Heart right ventricle (tissue), 16 donors: ENCODE measurements at regions of chr10 and their contacts with region 1.

Region 1: GRCh38 chr10:88232029-88232895 is 350.9 kb downstream of the RNLS start:
- DNase-seq: peak; percentile 84
- ATAC-seq: peak; percentile 58 to 72 (median 65)
- H3K4me3 ChIP-seq: no peak overlapping the region
- H3K27ac ChIP-seq: peak overlapping the region; percentile 7 to 77 (median 68)
- H3K4me1 ChIP-seq: peaks cover 6 to 78% (median 42%) of the 10 kb centered on the region in 9 donors
- H3K27me3 ChIP-seq: no peaks in the 10 kb centered on the region
- CTCF ChIP-seq: no peak

Region 2: DNA sequence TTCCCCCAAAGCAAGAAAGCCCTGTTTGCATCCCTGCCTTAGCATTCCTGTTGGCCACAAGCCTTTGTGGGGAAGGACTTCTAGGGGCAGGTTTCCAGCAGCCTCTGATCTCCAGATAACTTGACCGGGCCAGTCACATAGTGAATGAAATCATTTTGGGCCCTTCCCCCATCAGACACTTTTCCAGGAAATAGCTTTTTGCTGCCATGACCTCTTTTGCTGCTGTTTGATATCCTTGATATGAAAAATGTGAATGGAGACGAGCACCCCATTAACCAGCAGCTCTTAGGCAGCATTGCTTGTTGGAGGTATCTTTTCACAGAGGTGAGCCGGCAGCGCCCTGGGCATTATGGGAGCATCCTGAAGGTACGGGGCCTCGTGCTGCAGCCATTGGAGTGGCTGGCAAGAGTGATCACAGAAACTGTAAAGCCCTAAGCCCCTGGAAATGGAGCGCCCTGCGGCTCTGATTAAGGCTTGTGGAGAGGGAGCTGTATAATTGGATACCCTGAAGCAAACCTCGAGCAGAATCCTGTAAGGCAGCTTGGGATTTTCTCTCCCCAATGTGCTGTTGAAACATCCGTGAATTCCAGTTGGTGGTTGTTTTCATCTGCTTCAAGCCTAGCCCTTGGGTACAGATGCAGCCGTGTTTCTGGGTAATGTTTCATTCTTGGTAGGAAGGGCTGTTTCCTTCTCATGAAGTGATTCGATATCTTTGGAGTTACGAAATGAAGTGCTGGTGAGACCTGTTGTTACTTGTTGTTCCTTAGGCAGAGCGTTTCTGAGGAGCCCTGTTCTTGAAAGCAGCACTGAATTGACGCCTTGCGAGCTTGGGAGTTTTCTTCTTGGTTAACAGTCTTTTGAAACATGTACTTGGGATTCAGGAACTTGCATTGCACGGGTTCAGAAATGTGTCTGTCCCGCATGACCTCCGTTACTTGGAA is 189.8 kb before region 1 on chr10:
- intact Hi-C with region 1: loop called in 1 of 10 experiments (anchors 10 kb)
- DNase-seq: peak in 1 of 2 donors; percentile 17
- ATAC-seq: peak in 5 of 8 donors; percentile 38 to 71 (median 65)
- H3K4me3 ChIP-seq: no peak overlapping the region
- H3K27ac ChIP-seq: peak overlapping the region in 6 of 10 donors; percentile 26 to 65 (median 44)
- H3K4me1 ChIP-seq: peaks cover 3 to 71% (median 18%) of the 10 kb centered on the region in 9 donors
- H3K27me3 ChIP-seq: no peaks in the 10 kb centered on the region
- CTCF ChIP-seq: no peak

Region 3: DNA sequence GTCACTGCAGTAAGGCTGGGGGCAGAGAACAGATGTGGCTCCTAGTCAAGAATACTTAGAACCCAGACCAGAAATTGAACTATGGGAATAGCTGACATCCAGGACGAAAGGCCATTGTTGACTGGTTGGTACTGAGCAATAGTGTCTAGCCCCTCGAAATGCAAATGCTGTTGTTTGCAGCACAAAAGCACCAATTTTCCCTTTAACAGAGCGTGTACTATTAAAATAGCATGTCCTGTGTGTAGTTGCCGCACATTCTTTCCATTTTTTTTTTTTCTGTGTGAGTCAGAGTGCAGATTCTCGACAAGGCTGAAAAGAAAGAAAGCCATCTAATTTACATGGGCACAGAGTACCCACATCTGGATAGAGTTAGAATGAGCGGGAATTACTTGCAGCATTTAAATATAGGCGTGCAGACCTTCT is 66.4 kb before region 1 on chr10:
- intact Hi-C with region 1: loop called in 1 of 10 experiments (anchors 10 kb)
- DNase-seq: no peak
- ATAC-seq: peak in 1 of 8 donors; percentile 27
- H3K4me3 ChIP-seq: no peak overlapping the region
- H3K27ac ChIP-seq: no peak overlapping the region
- H3K4me1 ChIP-seq: peaks cover 0 to 27% (median 9%) of the 10 kb centered on the region in 9 donors
- H3K27me3 ChIP-seq: no peaks in the 10 kb centered on the region
- CTCF ChIP-seq: no peak